ENCODE measurements at regions of chr11 and their contacts with region 1.

Region 1: DNA sequence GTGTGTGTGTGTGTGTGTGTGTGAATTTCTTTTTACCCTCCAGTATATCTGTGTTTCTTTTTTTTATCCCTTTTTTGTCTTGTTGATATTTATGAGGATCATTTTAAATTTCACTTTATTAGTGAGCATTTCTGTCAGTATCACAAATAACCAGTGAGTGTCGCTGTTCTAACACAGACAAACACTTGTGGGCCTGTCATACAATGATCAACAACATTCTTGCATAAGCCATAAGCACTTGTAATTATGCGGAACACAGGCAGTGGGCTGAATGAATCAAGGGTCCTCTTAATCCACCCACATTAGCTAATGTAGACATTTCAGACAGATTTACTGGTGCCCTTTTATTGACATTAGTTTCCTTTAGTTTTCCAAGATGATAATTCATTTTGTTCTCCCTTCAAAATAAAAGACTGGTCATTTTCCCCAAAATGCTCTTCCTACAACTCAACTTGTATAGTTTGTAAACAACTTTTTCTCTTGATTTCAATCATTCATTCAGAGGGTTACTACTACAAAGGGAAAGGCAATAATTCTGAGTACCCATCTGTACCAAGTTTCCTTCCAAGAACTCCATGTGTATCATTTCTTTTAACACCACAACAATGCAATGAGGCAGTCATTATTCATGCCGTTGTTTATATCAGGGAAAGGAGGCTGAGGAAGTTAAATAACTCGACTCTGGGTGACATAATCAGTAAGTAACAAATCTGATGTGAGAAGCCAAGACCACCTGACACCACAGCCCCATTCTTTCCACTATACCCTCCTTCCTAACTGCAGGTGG is 34.5 kb upstream of the ANO3 start:
- DNase-seq: peak in 2 of 4 donors; percentile 19 to 56
- ATAC-seq: peak; percentile 76
- H3K4me3 ChIP-seq: no peak overlapping the region
- H3K27ac ChIP-seq: no peak overlapping the region
- H3K4me1 ChIP-seq: no peaks in the 10 kb centered on the region
- H3K27me3 ChIP-seq: no peaks in the 10 kb centered on the region
- CTCF ChIP-seq: peak; percentile 53 to 90 (median 78)
- POLR2A ChIP-seq: no peak

Region 2: GRCh38 chr11:26106726-26107125 is 190.7 kb before region 1 on chr11:
- intact Hi-C with region 1: no loop called
- DNase-seq: no peak
- ATAC-seq: no peak
- H3K4me3 ChIP-seq: no peak overlapping the region
- H3K27ac ChIP-seq: no peak overlapping the region
- H3K4me1 ChIP-seq: no peaks in the 10 kb centered on the region
- H3K27me3 ChIP-seq: no peaks in the 10 kb centered on the region
- CTCF ChIP-seq: no peak
- POLR2A ChIP-seq: no peak

Region 3: GRCh38 chr11:26331911-26332571 is 34.7 kb after region 1 on chr11 and contains the start of gene ANO3:
- intact Hi-C with region 1: no loop called
- DNase-seq: peak; percentile 73 to 90 (median 84)
- ATAC-seq: peak; percentile 98
- H3K4me3 ChIP-seq: no peak within 1 kb of the TSS
- H3K27ac ChIP-seq: no peak within 1 kb of the TSS
- H3K4me1 ChIP-seq: peaks cover 10% of the 10 kb centered on the region
- H3K27me3 ChIP-seq: no peaks in the 10 kb centered on the region
- CTCF ChIP-seq: peak; percentile 34 to 72 (median 56)
- POLR2A ChIP-seq: no peak
- total RNA-seq, gene ANO3: 0.52 to 5.3 TPM

Region 4: GRCh38 chr11:26649884-26650283 is 352.5 kb after region 1 on chr11:
- intact Hi-C with region 1: loop called (anchors 5 kb)
- DNase-seq: peak; percentile 69 to 81 (median 76)
- ATAC-seq: peak; percentile 82
- H3K4me3 ChIP-seq: no peak overlapping the region
- H3K27ac ChIP-seq: no peak overlapping the region
- H3K4me1 ChIP-seq: peaks cover 4% of the 10 kb centered on the region
- H3K27me3 ChIP-seq: peaks cover 0 to 5% of the 10 kb centered on the region in 2 donors
- CTCF ChIP-seq: peak; percentile 41 to 78 (median 68)
- POLR2A ChIP-seq: no peak

Region 5: DNA sequence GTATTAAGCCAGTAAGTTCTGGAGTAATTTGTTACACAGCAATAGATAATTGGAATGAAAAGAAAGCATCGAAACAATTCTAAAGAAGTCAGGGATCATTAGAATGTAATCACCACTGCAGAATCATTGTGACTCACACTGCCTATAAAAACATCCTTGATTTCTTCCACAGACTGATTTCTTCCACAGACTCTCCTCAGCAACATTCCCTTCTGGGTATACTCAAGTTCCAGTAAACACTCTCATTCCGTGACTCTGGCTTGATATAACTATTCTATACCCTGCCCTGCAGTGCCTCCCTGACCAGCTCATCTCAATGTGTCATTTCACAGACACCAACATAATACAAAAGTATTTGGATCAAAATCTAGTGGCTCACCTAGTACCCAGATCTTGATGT is 863.7 kb after region 1 on chr11:
- intact Hi-C with region 1: loop called (anchors 10 kb)
- DNase-seq: no peak
- ATAC-seq: no peak
- H3K4me3 ChIP-seq: no peak overlapping the region
- H3K27ac ChIP-seq: no peak overlapping the region
- H3K4me1 ChIP-seq: no peaks in the 10 kb centered on the region
- H3K27me3 ChIP-seq: no peaks in the 10 kb centered on the region
- CTCF ChIP-seq: no peak
- POLR2A ChIP-seq: no peak

Measured in body of pancreas (tissue), 4 donors.